ENCODE measurements at regions of chr3 and their contacts with region 1.

Region 1: GRCh38 chr3:90080988-90081387 is 973.6 kb downstream of the EPHA3 start:
- DNase-seq: no peak
- H3K4me3 ChIP-seq: no peak overlapping the region
- H3K4me3 Mint-ChIP-seq: no peak overlapping the region
- H3K27ac Mint-ChIP-seq: no peak overlapping the region
- H3K4me1 ChIP-seq: no peaks in the 10 kb centered on the region
- H3K4me1 Mint-ChIP-seq: no peaks in the 10 kb centered on the region
- H3K27me3 ChIP-seq: no peaks in the 10 kb centered on the region
- H3K27me3 Mint-ChIP-seq: no peaks in the 10 kb centered on the region
- CTCF ChIP-seq: no peak

Region 2: GRCh38 chr3:89851974-89852621 is 228.9 kb before region 1 on chr3:
- CTCF ChIA-PET with region 1: no interaction called
- POLR2A ChIA-PET with region 1: no interaction called
- intact Hi-C with region 1: no loop called
- DNase-seq: peak; percentile 52 to 69
- H3K4me3 ChIP-seq: no peak overlapping the region
- H3K4me3 Mint-ChIP-seq: no peak overlapping the region
- H3K27ac Mint-ChIP-seq: no peak overlapping the region
- H3K4me1 ChIP-seq: no peaks in the 10 kb centered on the region
- H3K4me1 Mint-ChIP-seq: no peaks in the 10 kb centered on the region
- H3K27me3 ChIP-seq: no peaks in the 10 kb centered on the region
- H3K27me3 Mint-ChIP-seq: no peaks in the 10 kb centered on the region
- CTCF ChIP-seq: peak; percentile 59 to 78

Region 3: GRCh38 chr3:90010341-90010740 is 70.6 kb before region 1 on chr3:
- CTCF ChIA-PET with region 1: no interaction called
- POLR2A ChIA-PET with region 1: no interaction called
- intact Hi-C with region 1: loop called (anchors 2 kb)
- DNase-seq: no peak
- H3K4me3 ChIP-seq: no peak overlapping the region
- H3K4me3 Mint-ChIP-seq: no peak overlapping the region
- H3K27ac Mint-ChIP-seq: no peak overlapping the region
- H3K4me1 ChIP-seq: peaks cover 5% of the 10 kb centered on the region; the same call in 1 of the 2 replicates
- H3K4me1 Mint-ChIP-seq: peaks cover 8% of the 10 kb centered on the region
- H3K27me3 ChIP-seq: no peaks in the 10 kb centered on the region
- H3K27me3 Mint-ChIP-seq: no peaks in the 10 kb centered on the region
- CTCF ChIP-seq: no peak

Region 4: DNA sequence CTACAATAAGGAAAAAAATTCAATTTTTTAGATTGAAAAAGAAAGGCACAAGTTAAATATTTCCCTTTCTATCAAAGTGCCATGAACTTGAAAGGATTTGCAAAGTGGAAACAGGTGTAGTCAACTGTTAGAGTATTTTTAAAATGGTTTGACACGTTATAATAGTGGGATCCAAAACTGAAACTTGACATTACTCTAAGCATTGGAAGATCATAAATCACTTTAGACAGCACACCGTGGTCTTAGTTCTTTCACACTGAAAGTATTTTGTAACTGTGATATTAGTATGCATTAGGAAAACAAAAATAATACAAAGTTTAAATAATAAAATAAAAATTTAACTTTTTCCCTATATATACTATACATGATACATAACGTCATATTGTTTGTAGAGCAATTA is 40.4 kb before region 1 on chr3:
- CTCF ChIA-PET with region 1: no interaction called
- POLR2A ChIA-PET with region 1: no interaction called
- intact Hi-C with region 1: no loop called
- DNase-seq: no peak
- H3K4me3 ChIP-seq: no peak overlapping the region
- H3K4me3 Mint-ChIP-seq: no peak overlapping the region
- H3K27ac Mint-ChIP-seq: no peak overlapping the region
- H3K4me1 ChIP-seq: peaks cover 20% of the 10 kb centered on the region; the same call in 1 of the 2 replicates
- H3K4me1 Mint-ChIP-seq: peaks cover 9% of the 10 kb centered on the region
- H3K27me3 ChIP-seq: no peaks in the 10 kb centered on the region
- H3K27me3 Mint-ChIP-seq: no peaks in the 10 kb centered on the region
- CTCF ChIP-seq: no peak

Region 5: GRCh38 chr3:90134090-90134489 is 53.1 kb after region 1 on chr3:
- CTCF ChIA-PET with region 1: no interaction called
- POLR2A ChIA-PET with region 1: no interaction called
- intact Hi-C with region 1: no loop called
- DNase-seq: no peak
- H3K4me3 ChIP-seq: no peak overlapping the region
- H3K4me3 Mint-ChIP-seq: no peak overlapping the region
- H3K27ac Mint-ChIP-seq: no peak overlapping the region
- H3K4me1 ChIP-seq: peaks cover 22% of the 10 kb centered on the region
- H3K4me1 Mint-ChIP-seq: peaks cover 16% of the 10 kb centered on the region
- H3K27me3 ChIP-seq: no peaks in the 10 kb centered on the region
- H3K27me3 Mint-ChIP-seq: no peaks in the 10 kb centered on the region
- CTCF ChIP-seq: no peak

Region 6: DNA sequence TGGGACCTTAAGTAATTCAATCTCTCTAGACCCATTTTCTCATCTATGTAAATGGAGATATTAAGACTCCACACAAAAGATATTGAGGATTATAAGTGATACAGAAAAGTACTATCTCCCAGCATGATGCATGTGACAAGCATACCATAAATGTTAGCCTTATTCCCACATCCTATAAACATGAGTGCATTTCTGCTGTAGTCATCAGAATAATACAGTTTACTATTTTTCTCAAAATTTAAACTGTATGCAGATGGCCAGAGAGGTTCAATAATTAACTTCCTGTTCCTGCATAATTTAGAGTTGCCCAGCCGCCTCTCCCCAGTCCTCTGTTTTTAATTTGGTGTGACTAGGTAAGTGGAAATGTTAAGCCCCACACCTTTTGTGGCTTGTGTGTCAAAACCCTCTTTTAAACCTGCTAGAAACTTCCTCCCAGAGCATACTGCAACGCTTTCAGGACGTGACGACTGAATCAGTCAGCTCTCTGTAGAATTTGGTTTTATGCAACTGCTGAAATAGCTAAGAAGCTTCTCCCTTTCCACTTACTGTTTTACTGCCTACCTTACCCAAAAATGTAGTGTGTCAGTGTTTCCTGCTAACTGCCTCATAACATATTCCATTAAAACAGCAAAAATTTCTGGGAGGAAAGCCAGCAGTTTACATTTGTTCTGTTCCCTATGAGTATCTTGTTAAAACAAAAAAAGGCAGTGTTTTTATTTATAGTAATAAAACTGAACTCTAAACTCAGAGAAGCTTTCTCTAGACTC is 64.3 kb after region 1 on chr3:
- CTCF ChIA-PET with region 1: no interaction called
- POLR2A ChIA-PET with region 1: no interaction called
- intact Hi-C with region 1: no loop called
- DNase-seq: no peak
- H3K4me3 ChIP-seq: no peak overlapping the region
- H3K4me3 Mint-ChIP-seq: no peak overlapping the region
- H3K27ac Mint-ChIP-seq: no peak overlapping the region
- H3K4me1 ChIP-seq: no peaks in the 10 kb centered on the region
- H3K4me1 Mint-ChIP-seq: no peaks in the 10 kb centered on the region
- H3K27me3 ChIP-seq: no peaks in the 10 kb centered on the region
- H3K27me3 Mint-ChIP-seq: no peaks in the 10 kb centered on the region
- CTCF ChIP-seq: no peak